ENCODE measurements at regions of chr6 and their contacts with region 1.

Region 1: DNA sequence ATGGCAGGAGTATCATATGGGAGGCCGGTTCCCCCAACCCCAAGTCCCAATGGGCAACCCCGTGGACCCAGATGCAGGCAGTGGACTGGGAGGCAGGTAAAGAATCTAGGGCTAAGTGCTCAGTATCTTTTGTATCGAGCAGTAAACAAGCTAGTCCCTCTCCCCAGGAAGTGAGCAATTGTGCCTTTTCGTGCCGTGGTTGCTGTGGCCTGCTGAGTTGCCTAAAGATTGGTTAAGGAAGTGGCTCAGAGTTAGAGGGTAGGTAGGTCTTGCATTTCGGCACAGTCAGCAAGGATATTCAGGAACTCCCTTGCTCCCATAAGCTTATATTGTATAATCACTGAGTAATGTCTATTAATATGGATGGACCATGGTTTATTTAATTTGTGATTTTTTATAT is 1.3 kb upstream of the DNAH8 start:
- H3K4me3 ChIP-seq: no peak overlapping the region
- H3K27ac ChIP-seq: no peak overlapping the region
- H3K4me1 ChIP-seq: no peaks in the 10 kb centered on the region
- CTCF ChIP-seq: no peak

Region 2: GRCh38 chr6:38639498-38640215 is 74.2 kb before region 1 on chr6 and contains the start of gene BTBD9:
- CTCF ChIA-PET with region 1: no interaction called
- POLR2A ChIA-PET with region 1: no interaction called
- H3K4me3 ChIP-seq: peak within 1 kb of the TSS; percentile 96
- H3K27ac ChIP-seq: peak within 1 kb of the TSS; percentile 77
- H3K4me1 ChIP-seq: 0 out of 2 replicates have a peak, but pooled peaks cover 5% of the 10 kb centered on the region
- CTCF ChIP-seq: no peak

Region 3: DNA sequence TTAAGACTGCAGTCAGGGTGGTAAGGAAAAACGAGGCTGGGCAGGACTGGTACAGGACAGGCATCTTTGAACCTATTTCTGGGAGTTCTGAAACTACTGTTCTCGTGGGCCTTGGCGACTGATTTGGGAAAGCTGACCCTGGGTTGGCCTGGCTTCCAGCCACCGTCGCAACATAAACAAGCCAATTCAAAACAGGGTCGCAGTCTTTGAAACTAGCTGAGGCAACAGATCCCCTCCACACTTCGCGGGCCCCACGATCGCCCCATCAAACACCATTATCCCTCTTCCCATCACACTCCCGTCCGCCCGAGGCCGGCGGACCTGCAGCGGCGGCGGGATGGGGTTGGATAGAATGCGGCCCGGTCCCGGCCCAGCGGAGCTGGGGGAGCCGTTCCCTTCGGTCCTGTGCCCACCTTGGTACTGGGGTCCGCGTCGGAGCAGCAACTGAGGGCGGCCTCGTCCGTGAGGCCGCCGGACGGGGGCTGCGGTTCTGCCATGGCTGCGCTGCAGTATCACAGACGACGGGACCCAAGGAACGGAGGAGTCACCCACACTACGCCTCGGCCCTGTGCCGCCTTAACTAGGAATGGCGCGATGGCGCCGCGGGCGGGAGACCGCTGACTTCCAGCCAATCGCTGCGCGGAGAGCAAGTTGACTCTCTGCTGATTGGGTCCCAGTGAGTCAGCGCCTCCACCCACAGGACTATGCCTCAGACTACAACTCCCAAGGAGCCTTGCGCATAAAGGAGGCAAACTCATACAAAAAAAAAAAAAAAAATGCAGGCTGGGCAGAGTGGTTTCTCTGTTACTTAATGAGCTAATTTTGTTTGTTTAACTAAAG is 11.0 kb before region 1 on chr6 and contains the start of gene GLO1:
- CTCF ChIA-PET with region 1: no interaction called
- POLR2A ChIA-PET with region 1: interaction called, 15 read pairs
- H3K4me3 ChIP-seq: peak within 1 kb of the TSS; percentile 68
- H3K27ac ChIP-seq: peak within 1 kb of the TSS; percentile 93
- H3K4me1 ChIP-seq: no peaks in the 10 kb centered on the region
- CTCF ChIP-seq: peak; percentile 35; the same call in 1 of the 2 replicates